Left cardiac atrium (tissue), 4 donors: ENCODE measurements at regions of chr3 and their contacts with region 1.

Region 1: GRCh38 chr3:136018876-136019275 is 53.3 kb downstream of the PPP2R3A start:
- DNase-seq: no peak
- ATAC-seq: peak in 1 of 2 donors; percentile 59

Region 2: GRCh38 chr3:135970506-135971116 is 48.3 kb before region 1 on chr3:
- intact Hi-C with region 1: loop called in 1 of 2 experiments (anchors 5 kb)
- DNase-seq: peak; percentile 20
- ATAC-seq: peak in 1 of 2 donors; percentile 19